ENCODE measurements at regions of chr4 and their contacts with region 1.

Region 1: GRCh38 chr4:147866532-147867271 is 134.8 kb downstream of the ARHGAP10 start:
- DNase-seq: peak; percentile 38
- H3K4me3 ChIP-seq: no peak overlapping the region
- H3K27me3 ChIP-seq: no peaks in the 10 kb centered on the region
- CTCF ChIP-seq: peak; percentile 96

Region 2: DNA sequence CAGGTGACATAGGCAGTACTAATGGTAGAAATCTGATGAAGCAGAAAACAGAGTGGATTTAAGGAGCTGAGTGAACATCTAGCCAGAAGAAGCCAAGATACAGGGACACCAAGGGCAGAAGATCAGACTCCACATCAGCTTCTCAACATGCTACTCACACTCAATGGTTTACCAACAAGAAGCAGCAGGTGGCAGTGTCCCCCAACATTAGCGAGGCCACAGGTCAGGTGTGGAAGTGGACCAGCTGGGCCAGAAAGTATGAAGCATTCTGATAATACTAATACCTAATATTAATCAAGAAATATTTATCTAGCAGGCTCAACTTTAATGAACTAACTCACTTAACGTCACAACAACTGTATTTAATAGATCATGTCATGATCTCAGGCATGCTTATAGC is 847.6 kb before region 1 on chr4:
- CTCF ChIA-PET with region 1: interaction called, 10 read pairs
- POLR2A ChIA-PET with region 1: no interaction called
- DNase-seq: no peak
- H3K4me3 ChIP-seq: no peak overlapping the region
- H3K27me3 ChIP-seq: no peaks in the 10 kb centered on the region; the same call in 1 of the 2 replicates
- CTCF ChIP-seq: peak; percentile 70

Region 3: DNA sequence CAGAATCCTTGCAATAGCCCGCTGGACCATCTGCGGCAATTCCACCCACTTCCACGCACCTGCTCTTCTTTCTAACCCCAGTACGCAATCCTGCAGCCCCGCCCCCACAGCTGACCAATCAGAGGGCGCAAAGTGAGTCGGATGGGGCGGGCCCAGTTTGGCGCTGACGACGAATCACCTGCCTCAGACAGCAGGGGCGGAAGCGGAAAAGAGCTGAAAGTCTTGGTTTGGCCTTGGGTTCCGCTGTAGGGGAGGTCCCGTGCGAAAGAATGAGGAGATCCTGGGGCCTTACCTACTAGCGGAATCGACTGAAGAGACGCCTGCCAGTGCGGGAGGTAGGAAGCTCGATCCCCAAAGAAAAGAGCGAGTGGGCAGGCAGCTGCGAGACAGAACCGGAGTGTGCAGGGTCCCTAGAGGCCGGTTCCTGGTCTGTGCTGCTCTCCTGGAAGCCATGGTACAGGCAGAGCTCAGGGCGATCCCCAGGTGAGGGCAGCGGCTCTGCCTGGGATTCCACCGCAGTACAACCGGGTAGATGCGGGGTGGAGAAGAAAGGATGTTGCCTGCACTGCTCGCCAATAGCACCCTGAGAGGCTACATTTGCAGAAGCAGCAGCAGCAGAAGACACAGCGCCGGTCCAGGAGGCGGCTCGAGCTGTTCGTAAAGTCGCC is 249.4 kb before region 1 on chr4 and contains the start of gene TMEM184C:
- CTCF ChIA-PET with region 1: interaction called, 15 read pairs
- POLR2A ChIA-PET with region 1: no interaction called
- DNase-seq: peak; percentile 68
- H3K4me3 ChIP-seq: peak within 1 kb of the TSS; percentile 81
- H3K27me3 ChIP-seq: no peaks in the 10 kb centered on the region
- CTCF ChIP-seq: peak; percentile 29
- polyA plus RNA-seq, gene TMEM184C: 27.1 and 35.1 TPM in 2 replicates

Region 4: GRCh38 chr4:147683717-147684700 is 182.7 kb before region 1 on chr4 and contains the start of gene PRMT9:
- CTCF ChIA-PET with region 1: interaction called, 20 read pairs
- POLR2A ChIA-PET with region 1: no interaction called
- DNase-seq: peak; percentile 33
- H3K4me3 ChIP-seq: peak within 1 kb of the TSS; percentile 78
- H3K27me3 ChIP-seq: no peaks in the 10 kb centered on the region; the same call in 1 of the 2 replicates
- CTCF ChIP-seq: no peak
- polyA plus RNA-seq, gene PRMT9: 3.3 and 6.4 TPM in 2 replicates

Region 5: GRCh38 chr4:147707865-147708672 is 158.6 kb before region 1 on chr4:
- CTCF ChIA-PET with region 1: interaction called, 169 read pairs
- POLR2A ChIA-PET with region 1: interaction called, 3 read pairs
- DNase-seq: no peak
- H3K4me3 ChIP-seq: no peak overlapping the region
- H3K27me3 ChIP-seq: no peaks in the 10 kb centered on the region
- CTCF ChIP-seq: peak; percentile 85

Region 6: GRCh38 chr4:147831551-147832177 is 35.0 kb before region 1 on chr4:
- CTCF ChIA-PET with region 1: interaction called, 13 read pairs
- POLR2A ChIA-PET with region 1: interaction called, 3 read pairs
- DNase-seq: peak; percentile 71
- H3K4me3 ChIP-seq: no peak overlapping the region
- H3K27me3 ChIP-seq: no peaks in the 10 kb centered on the region
- CTCF ChIP-seq: no peak

Region 7: GRCh38 chr4:147879676-147880075 is 13.0 kb after region 1 on chr4:
- CTCF ChIA-PET with region 1: interaction called, 17 read pairs
- POLR2A ChIA-PET with region 1: no interaction called
- DNase-seq: no peak
- H3K4me3 ChIP-seq: no peak overlapping the region
- H3K27me3 ChIP-seq: no peaks in the 10 kb centered on the region
- CTCF ChIP-seq: no peak

Region 8: DNA sequence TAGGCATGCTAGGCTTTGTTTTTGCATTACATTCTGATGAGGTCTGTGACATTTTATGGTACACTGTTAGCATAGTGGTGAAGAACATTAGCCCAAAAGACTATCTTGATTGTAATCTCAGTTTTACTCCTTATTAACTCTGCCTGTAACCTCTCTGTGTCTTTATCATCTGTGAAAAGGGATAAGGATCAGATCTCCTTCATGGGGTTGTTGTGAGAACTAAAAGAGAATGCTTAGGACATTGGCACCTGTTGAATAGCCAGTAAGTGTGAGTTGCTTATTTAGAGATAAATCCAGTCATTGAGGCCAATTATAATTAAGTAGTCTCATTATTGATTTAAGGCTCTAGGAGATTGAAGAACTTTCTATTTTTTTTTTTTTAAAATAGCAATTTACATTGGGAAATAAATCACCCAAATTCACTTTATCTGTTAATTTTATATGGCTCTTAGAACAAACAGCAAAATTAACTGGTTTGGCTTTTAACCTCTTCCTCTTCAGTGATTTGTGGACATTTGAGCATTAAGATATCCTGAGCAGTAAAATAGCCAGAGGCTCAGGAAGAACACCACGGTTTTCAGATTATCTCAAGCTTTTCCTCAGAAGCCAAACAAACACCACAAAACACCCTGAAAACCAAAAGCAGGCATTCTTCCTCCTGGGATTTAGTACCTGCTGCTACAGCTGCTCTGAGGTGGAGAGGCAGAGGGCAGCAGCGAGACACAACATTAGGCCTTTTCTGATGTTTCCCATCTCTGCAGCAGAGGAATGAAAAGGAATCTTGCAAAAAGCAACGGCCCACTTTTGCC is 58.1 kb after region 1 on chr4:
- CTCF ChIA-PET with region 1: no interaction called
- POLR2A ChIA-PET with region 1: no interaction called
- DNase-seq: no peak
- H3K4me3 ChIP-seq: no peak overlapping the region
- H3K27me3 ChIP-seq: no peaks in the 10 kb centered on the region
- CTCF ChIP-seq: peak; percentile 62